Esophagus muscularis mucosa (tissue), 4 donors: ENCODE measurements at regions of chr9 and their contacts with region 1.

Region 1: GRCh38 chr9:35603987-35604577 is 980 bp upstream of the TESK1 start:
- DNase-seq: peak; percentile 100
- H3K4me3 ChIP-seq: peak overlapping the region; percentile 86 to 96 (median 90)
- H3K27ac ChIP-seq: peak overlapping the region; percentile 92 to 96 (median 94)
- H3K4me1 ChIP-seq: peaks cover 24 to 37% (median 35%) of the 10 kb centered on the region in 4 donors
- H3K27me3 ChIP-seq: no peaks in the 10 kb centered on the region
- CTCF ChIP-seq: peak; percentile 83 to 98 (median 94)
- EP300 ChIP-seq: no peak
- POLR2A ChIP-seq: peak; percentile 70

Region 2: DNA sequence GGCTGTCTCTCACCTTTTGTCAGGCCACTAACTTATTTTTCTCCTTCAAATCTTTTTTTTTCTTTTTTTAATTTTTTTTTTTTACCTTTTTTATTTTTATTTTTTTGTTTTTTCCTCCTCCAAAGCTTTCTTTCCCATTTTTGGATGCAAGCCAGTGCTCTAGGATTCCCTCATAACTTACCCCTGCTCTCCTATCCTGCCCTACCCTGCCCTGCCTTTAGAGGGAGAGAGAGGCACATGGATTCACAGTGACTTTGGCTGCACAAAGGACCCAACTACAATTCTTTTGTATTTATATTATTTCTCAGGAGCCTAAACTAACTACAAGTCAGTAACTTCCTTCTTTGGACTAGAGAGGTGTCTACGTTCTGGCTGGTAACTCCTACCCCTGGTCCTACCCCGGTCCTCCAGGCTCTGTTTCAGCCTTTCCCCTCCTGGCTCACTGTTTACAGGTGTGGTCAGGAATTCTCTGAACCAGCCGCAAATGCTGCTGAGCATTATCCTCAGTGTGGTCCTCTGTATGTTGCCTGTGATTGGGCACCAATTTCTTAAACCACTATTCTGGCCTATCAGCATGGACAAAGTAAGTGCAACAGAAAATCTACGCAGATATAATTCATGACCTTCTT is 122.6 kb before region 1 on chr9:
- intact Hi-C with region 1: loop called (anchors 5 kb)
- DNase-seq: no peak
- H3K4me3 ChIP-seq: no peak overlapping the region
- H3K27ac ChIP-seq: no peak overlapping the region
- H3K4me1 ChIP-seq: peaks cover 4 to 14% (median 6%) of the 10 kb centered on the region in 4 donors
- H3K27me3 ChIP-seq: no peaks in the 10 kb centered on the region
- CTCF ChIP-seq: peak; percentile 72 to 88 (median 86)
- EP300 ChIP-seq: no peak
- POLR2A ChIP-seq: no peak

Region 3: DNA sequence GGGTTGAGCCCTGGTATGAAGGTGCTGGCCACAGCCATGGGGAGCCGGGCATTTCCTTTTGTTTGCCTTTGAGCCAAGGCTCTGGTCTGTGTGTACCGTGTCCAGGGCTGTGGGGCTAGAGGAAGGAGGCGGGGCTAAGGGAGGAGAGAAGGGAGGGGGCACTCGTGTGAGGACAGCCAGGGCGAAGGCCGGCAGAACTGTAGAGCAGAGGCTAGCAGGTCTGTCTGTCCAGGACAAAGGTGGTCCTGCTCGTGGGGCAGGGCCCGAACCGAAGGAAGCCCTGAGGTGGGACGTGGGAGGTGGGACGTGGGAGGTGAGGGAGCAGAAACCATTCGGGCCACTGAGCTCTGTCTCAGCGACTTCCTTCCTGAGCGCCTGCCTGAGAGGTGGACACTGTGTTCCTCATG is 40.3 kb before region 1 on chr9:
- intact Hi-C with region 1: loop called (anchors 5 kb)
- DNase-seq: no peak
- H3K4me3 ChIP-seq: peak overlapping the region; percentile 19 to 44 (median 22)
- H3K27ac ChIP-seq: peak overlapping the region; percentile 77 to 84 (median 80)
- H3K4me1 ChIP-seq: peaks cover 28 to 52% (median 48%) of the 10 kb centered on the region in 4 donors
- H3K27me3 ChIP-seq: no peaks in the 10 kb centered on the region
- CTCF ChIP-seq: no peak
- EP300 ChIP-seq: no peak
- POLR2A ChIP-seq: no peak

Region 4: GRCh38 chr9:35646533-35647265 is 42.6 kb after region 1 on chr9:
- intact Hi-C with region 1: loop called (anchors 2 kb)
- DNase-seq: peak; percentile 97
- H3K4me3 ChIP-seq: peak overlapping the region; percentile 49 to 68 (median 63)
- H3K27ac ChIP-seq: peak overlapping the region; percentile 77 to 92 (median 85)
- H3K4me1 ChIP-seq: peaks cover 8 to 27% (median 22%) of the 10 kb centered on the region in 4 donors
- H3K27me3 ChIP-seq: no peaks in the 10 kb centered on the region
- CTCF ChIP-seq: peak in 2 of 3 experiments; percentile 97 to 98
- EP300 ChIP-seq: no peak
- POLR2A ChIP-seq: peak; percentile 81

Region 5: GRCh38 chr9:35736201-35736633 is 132.1 kb after region 1 on chr9:
- intact Hi-C with region 1: loop called (anchors 5 kb)
- DNase-seq: no peak
- H3K4me3 ChIP-seq: no peak overlapping the region
- H3K27ac ChIP-seq: peak overlapping the region; percentile 46 to 99 (median 80)
- H3K4me1 ChIP-seq: peaks cover 17 to 42% (median 36%) of the 10 kb centered on the region in 4 donors
- H3K27me3 ChIP-seq: no peaks in the 10 kb centered on the region
- CTCF ChIP-seq: peak; percentile 70 to 86 (median 73)
- EP300 ChIP-seq: no peak
- POLR2A ChIP-seq: no peak